Right ventricle myocardium superior (tissue), 1 donor: ENCODE measurements at regions of chr5 and their contacts with region 1.

Region 1: GRCh38 chr5:36305571-36306326 is 4.0 kb upstream of the RANBP3L start:
- DNase-seq: peak; percentile 64
- ATAC-seq: peak; percentile 83

Region 2: DNA sequence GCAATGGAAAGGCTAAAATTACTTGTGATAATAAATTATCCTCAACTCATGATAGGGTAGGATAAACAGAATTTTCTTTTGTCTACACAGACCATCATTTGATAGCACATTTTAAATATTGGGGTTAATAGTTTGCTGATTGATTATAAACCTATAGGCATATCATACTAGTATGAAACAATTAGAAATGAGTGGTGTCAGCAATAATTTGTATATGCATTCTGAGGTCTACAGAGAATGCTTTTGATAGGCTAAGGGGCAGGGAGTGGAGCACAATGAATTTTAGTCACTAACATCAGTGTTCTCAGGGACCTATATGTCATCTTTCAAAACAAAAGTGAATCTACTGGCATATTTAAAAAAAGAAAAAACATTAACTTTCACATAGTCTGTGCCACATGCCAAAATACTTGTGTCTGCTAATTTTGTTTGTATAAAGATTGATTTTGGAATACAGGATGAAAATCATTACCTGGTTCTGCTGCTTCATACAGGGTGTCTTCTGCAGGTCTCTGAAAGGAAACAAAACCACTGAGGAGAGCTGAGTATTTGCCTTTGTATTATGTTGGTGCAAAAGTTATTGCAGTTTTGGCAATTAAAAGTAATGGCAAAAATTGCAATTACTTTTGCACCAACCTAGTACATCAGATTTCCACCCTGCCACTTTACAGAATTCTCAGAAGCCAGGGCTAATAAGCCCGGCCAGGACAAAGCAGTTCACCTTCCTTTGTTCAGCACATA is 36.1 kb before region 1 on chr5:
- intact Hi-C with region 1: loop called (anchors 5 kb)
- DNase-seq: no peak
- ATAC-seq: no peak